PC-9 (cell line): ENCODE measurements at regions of chr9 and their contacts with region 1.

Region 1: GRCh38 chr9:119289740-119290433 is 79.3 kb downstream of the BRINP1 start:
- DNase-seq: peak in 1 of 2 experiments; percentile 18
- H3K4me3 ChIP-seq: no peak overlapping the region
- H3K27ac ChIP-seq: no peak overlapping the region
- H3K4me1 ChIP-seq: no peaks in the 10 kb centered on the region
- H3K27me3 ChIP-seq: no peaks in the 10 kb centered on the region
- CTCF ChIP-seq: peak; percentile 72

Region 2: DNA sequence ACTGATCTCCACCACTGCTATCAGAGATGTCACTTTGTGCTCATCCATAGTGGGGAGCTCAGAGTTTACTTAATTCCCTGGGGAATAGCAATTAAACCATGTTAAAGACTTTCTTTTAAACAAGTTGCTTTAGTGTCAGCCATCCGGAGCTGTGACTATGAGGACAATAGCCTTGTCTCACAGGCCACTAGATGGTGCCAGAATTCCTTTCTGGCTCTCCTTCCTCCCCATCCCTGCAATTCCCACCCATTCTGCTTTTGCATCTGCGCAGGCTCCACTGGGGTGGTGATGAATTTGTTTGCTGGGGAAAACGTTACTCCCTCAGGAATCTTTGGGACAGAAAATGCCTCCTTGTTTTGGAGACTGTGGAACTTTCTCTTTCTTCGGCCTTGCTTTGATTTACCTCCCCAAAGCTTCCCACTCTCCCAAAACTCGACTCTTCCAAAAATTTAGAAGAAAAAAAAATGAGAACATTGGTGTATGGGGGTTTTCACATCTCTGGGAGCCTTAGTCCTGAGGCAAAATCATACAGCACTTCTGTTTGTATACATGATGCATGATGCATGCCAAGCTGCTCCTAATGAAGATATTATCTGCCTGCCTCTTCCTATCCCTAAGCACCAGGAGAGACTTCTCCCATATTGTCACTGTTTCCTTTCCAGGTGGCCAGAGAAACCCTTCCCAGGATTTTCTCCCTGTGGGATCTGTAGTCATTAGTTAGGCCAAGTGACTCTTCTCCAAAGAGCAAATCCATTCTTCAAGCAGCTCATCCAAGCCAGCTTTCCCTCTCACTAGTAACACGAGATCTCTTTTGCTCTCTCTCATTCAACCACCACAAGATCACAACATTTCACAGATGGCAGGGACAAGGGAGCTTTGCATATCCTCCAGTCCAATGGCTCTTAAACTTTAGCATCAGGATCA is 1119.6 kb before region 1 on chr9:
- CTCF ChIA-PET with region 1: no interaction called
- POLR2A ChIA-PET with region 1: no interaction called
- intact Hi-C with region 1: loop called (anchors 2 kb)
- DNase-seq: peak in 1 of 2 experiments; percentile 39
- H3K4me3 ChIP-seq: no peak overlapping the region
- H3K27ac ChIP-seq: no peak overlapping the region
- H3K4me1 ChIP-seq: no peaks in the 10 kb centered on the region
- H3K27me3 ChIP-seq: no peaks in the 10 kb centered on the region
- CTCF ChIP-seq: peak; percentile 71

Region 3: GRCh38 chr9:118522093-118523028 is 767.5 kb before region 1 on chr9:
- CTCF ChIA-PET with region 1: no interaction called
- POLR2A ChIA-PET with region 1: no interaction called
- intact Hi-C with region 1: loop called (anchors 5 kb)
- DNase-seq: peak in 1 of 2 experiments; percentile 36
- H3K4me3 ChIP-seq: no peak overlapping the region
- H3K27ac ChIP-seq: no peak overlapping the region
- H3K4me1 ChIP-seq: no peaks in the 10 kb centered on the region
- H3K27me3 ChIP-seq: no peaks in the 10 kb centered on the region
- CTCF ChIP-seq: peak; percentile 63

Region 4: DNA sequence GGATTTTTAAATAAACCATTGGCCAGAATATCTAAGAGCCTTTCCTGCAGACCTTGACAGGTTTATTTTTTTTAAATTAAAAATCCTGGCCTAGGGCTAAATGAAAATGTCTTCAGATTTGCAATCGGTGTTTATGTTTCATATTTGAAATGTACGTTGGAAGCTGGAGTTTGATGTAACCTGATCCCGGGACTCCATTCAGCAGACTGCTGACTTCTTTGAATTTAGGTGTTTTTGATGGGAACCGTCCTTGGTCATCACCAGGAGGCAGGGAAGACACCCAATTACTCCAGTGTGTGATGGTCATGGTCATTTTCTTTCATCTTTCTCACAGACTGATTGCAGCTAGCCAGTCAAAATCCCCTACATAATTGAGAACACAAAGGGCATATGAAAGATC is 139.4 kb after region 1 on chr9:
- CTCF ChIA-PET with region 1: no interaction called
- POLR2A ChIA-PET with region 1: no interaction called
- intact Hi-C with region 1: no loop called
- DNase-seq: no peak
- H3K4me3 ChIP-seq: no peak overlapping the region
- H3K27ac ChIP-seq: no peak overlapping the region
- H3K4me1 ChIP-seq: no peaks in the 10 kb centered on the region
- H3K27me3 ChIP-seq: no peaks in the 10 kb centered on the region
- CTCF ChIP-seq: no peak